AG04449 (cell line): ENCODE measurements at regions of chr19 and their contacts with region 1.

Region 1: GRCh38 chr19:55467236-55468053 is 2.9 kb upstream of the C19orf85 start:
- DNase-seq: no peak
- H3K4me3 ChIP-seq: no peak overlapping the region
- CTCF ChIP-seq: peak; percentile 96

Region 2: GRCh38 chr19:55251341-55252081 is 215.9 kb before region 1 on chr19:
- CTCF ChIA-PET with region 1: no interaction called
- POLR2A ChIA-PET with region 1: no interaction called
- DNase-seq: no peak
- H3K4me3 ChIP-seq: no peak overlapping the region
- CTCF ChIP-seq: no peak

Region 3: GRCh38 chr19:55443060-55443823 is 24.2 kb before region 1 on chr19 and contains the start of gene SHISA7:
- CTCF ChIA-PET with region 1: interaction called, 11 read pairs
- POLR2A ChIA-PET with region 1: no interaction called
- DNase-seq: no peak
- H3K4me3 ChIP-seq: no peak within 1 kb of the TSS
- CTCF ChIP-seq: no peak

Region 4: GRCh38 chr19:55452749-55453346 is 14.6 kb before region 1 on chr19:
- CTCF ChIA-PET with region 1: interaction called, 30 read pairs
- POLR2A ChIA-PET with region 1: no interaction called
- DNase-seq: no peak
- H3K4me3 ChIP-seq: no peak overlapping the region
- CTCF ChIP-seq: no peak

Region 5: DNA sequence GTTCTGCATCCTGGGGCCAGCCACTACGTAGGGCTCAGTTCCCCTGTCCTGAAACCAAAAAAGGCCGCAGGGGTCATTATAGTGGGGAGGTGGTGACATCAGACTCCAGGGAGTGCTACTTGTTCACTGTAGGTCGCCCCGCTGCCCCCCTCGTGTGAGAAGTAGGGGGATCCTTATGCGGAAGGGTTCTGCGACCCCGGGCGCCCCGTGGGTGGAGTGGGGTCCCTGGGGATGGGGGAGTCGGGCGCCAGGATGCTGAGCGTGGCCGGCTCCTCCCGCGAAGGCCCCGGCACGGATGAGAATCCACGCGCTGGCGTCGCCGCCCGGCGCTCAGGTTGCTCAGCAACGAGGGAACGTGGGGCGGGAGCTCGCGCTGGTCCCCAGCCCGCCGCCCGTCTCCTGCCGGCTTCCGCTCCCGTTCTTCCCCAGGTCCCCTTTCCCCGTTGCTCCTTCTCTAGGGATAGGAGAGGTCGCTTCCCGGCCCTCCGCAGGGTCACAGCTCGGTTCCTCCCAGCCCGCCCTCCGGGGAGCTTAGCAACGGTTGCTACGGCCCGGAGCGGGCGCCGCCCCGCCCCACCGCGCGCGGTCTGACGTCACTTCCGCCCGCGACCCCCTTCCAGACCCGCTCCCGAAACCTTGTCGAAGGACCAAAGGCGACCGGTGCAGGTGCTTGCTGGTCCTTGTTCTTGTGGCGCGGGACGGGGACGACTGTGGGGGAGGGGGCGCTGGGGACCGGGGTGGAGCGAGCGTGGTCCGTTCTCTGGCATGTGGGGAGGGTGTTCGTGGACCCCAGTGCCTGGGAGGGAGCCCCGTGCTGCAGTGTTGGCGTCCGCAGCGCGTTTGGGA is 17.4 kb after region 1 on chr19 and contains the start of gene NAT14:
- CTCF ChIA-PET with region 1: interaction called, 173 read pairs
- POLR2A ChIA-PET with region 1: interaction called, 3 read pairs
- DNase-seq: no peak
- H3K4me3 ChIP-seq: peak within 1 kb of the TSS; percentile 76
- CTCF ChIP-seq: no peak

Region 6: DNA sequence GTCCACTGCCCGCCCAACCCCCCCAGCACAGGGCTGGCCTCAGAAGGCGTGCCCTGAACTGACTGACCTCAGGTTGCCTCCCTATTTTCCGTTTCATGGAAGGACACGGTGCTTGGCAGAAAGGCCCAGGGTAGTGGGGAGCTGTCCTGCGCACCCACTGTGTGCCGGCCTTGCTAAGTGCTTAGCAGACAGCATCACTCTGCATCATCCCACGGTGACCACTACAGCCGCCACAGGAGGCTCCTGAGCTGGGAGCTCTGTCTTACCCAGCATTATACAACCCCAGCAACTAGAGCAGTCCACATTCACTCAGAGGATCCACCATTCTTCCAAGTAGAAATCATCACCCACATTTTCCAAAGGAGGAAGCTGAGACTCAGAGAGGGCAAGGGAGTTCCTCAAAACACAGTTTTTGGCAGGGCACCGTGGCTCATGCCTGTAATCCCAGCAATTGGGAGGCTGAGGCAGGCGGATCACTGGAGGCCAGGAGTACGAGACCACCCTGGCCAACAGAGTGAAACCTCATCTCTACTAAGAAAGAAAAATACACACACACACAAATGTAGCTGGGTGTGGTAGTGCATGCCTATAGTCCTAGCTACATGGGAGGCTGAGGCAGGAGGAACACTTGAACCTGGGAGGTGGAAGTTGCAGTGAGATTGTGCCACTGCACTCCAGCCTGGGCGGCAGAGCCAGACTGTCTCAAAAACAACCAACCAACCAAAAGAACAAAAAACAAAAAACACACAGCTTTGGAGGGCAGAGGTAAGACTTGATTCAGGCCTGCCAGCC is 67.9 kb after region 1 on chr19:
- CTCF ChIA-PET with region 1: interaction called, 11 read pairs
- POLR2A ChIA-PET with region 1: no interaction called
- DNase-seq: no peak
- H3K4me3 ChIP-seq: no peak overlapping the region
- CTCF ChIP-seq: no peak

Region 7: DNA sequence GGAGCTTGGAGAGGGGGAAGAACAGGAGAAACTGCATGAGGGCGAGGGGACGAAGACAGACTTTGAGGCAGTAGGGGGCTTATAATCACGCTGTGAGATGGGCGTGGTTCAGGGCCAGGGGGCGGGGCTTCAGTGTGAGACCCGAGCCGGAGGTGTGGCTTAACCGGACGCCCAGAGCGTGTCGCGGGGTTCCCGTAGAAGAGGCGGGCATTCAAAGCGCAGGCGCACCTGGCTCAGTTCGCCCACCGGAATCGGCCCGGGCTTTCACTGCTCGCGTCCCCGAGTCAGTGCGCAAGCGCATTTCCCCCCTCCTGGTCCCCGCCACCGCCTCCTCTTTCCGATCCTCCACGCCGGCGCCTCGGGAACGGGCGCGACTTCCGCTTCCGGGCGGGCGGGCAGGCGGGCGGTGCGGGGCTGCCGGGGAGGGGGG is 137.8 kb after region 1 on chr19:
- CTCF ChIA-PET with region 1: interaction called, 10 read pairs
- POLR2A ChIA-PET with region 1: no interaction called
- DNase-seq: peak; percentile 65
- H3K4me3 ChIP-seq: peak overlapping the region; percentile 96
- CTCF ChIP-seq: no peak

Region 8: DNA sequence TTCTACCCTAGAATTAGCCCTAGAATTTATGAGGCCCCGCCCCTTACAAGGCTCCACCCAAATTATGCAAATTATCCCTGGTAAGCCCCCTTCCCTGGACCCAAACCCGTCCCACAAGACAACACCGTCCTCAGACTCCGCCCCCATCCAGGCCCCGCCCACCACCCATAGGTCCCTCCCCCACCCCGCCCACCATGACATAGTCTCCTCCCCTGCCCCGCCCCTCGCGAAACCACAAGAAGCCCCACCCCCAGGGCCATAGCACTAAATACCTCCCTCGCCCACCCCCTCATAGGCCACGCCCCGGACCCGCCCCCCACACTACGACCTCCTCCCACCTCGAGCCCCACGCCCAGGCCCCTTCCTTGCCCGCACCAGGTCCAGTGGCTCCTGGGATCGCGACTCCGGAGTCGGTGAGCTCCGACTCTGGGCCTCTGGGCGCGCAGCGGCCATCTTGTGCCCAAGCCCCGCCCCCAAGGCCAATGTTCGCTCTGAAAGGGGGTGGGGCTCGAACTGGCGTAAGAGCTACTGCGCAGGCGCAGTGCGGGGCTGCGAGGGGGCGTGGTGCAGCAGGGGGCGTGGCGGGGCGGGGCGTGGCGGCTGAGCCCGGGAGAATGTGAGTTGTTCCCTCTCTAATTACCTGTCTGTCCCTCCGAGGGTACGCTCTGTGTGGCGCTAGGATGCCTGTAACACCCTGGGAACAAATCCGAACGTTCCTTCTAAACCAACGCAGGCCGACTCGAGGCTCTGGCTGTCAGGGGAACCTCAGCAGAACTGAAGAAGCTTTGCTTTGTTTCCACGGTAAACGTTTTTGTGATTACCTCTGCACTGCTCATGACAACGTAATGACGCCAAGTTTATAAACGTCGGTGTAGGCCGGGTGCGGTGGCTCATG is 156.9 kb after region 1 on chr19 and contains the start of gene ZNF784:
- CTCF ChIA-PET with region 1: interaction called, 18 read pairs
- POLR2A ChIA-PET with region 1: no interaction called
- DNase-seq: no peak
- H3K4me3 ChIP-seq: peak within 1 kb of the TSS; percentile 78
- CTCF ChIP-seq: no peak

Region 9: GRCh38 chr19:55738302-55738701 is 270.9 kb after region 1 on chr19 and contains the start of gene NLRP9:
- CTCF ChIA-PET with region 1: no interaction called
- POLR2A ChIA-PET with region 1: no interaction called
- DNase-seq: no peak
- H3K4me3 ChIP-seq: no peak within 1 kb of the TSS
- CTCF ChIP-seq: no peak

Region 10: DNA sequence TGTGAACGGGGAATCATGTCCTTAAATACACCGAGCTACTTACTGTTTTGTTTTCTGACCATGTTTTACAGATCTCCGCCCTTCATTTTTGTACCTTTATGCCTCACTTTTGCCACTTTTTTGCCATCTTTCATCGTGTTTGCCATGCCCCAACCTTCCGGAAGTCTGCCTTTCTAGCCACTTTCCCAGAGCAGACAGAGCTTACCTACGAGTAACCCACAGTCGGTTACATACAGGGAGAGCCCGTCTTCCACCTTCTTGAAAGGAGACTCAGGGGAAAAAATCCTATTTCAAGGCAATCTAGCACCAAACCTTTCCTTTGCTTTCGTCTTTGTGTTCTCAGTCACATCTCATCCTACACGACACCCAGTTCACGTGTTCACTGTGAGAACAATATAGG is 327.6 kb after region 1 on chr19:
- CTCF ChIA-PET with region 1: no interaction called
- POLR2A ChIA-PET with region 1: no interaction called
- DNase-seq: no peak
- H3K4me3 ChIP-seq: no peak overlapping the region
- CTCF ChIP-seq: no peak